ENCODE measurements at regions of chr17 and their contacts with region 1.

Region 1: DNA sequence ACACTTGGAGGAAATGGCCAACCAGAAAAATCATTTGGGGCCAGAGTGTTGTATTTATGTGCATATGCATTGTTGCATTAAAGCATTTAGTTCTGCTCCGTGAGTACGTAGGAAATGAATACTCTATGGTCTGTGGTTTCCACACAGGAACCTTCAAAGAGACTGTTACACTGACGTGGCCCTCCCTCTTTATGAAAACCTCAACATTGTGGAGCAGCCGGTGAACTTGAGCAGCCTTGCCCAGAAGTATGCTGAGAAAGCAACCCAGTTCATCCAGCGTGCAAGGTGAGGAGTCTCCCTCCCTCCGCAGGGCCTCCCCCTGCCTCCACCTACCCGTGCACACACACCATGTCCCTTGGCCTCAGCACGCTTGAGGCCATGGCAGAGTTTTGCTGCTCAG is 65.2 kb downstream of the ARSG start:
- DNase-seq: peak; percentile 46 to 84 (median 82)
- H3K4me3 ChIP-seq: peak overlapping the region; percentile 5
- H3K4me3 Mint-ChIP-seq: peak overlapping the region; percentile 23 to 82 (median 70)
- H3K27ac ChIP-seq: no peak overlapping the region
- H3K27ac Mint-ChIP-seq: peak overlapping the region; percentile 55 to 96 (median 92)
- H3K4me1 ChIP-seq: peaks cover 60% of the 10 kb centered on the region
- H3K4me1 Mint-ChIP-seq: peaks cover 53 to 68% (median 68%) of the 10 kb centered on the region in 3 donors
- H3K27me3 ChIP-seq: no peaks in the 10 kb centered on the region
- H3K27me3 Mint-ChIP-seq: no peaks in the 10 kb centered on the region

Region 2: DNA sequence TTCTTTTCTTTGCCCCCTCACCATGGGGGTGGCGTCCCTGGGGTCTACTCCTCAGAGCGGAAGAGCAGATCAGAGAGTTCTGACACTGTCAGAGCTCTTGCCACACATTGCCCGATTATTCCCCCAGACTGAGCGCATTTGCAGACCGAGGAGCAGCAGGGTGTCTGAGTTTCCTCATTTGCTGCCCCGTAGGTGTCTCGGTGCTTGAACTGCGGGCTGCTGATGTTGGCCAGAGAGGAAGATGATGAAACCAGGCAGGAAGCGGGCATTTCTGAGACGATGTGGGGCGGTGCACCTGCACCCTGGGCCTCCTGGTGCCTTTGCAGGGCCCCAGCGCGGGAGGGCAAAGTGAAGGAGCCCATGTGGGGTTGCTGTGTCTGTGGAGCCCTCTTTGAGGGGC is 10.1 kb before region 1 on chr17:
- CTCF ChIA-PET with region 1: interaction called, 10 read pairs
- POLR2A ChIA-PET with region 1: interaction called, 4 read pairs
- DNase-seq: peak; percentile 34 to 79 (median 62)
- H3K4me3 ChIP-seq: peak overlapping the region; percentile 28
- H3K4me3 Mint-ChIP-seq: peak overlapping the region; percentile 55 to 87 (median 82)
- H3K27ac ChIP-seq: peak overlapping the region; percentile 43
- H3K27ac Mint-ChIP-seq: peak overlapping the region; percentile 90 to 99 (median 94)
- H3K4me1 ChIP-seq: peaks cover 77% of the 10 kb centered on the region
- H3K4me1 Mint-ChIP-seq: peaks cover 74 to 84% (median 76%) of the 10 kb centered on the region in 3 donors
- H3K27me3 ChIP-seq: no peaks in the 10 kb centered on the region
- H3K27me3 Mint-ChIP-seq: peaks cover 0 to 1% of the 10 kb centered on the region in 2 donors

Region 3: GRCh38 chr17:68391561-68392268 is 35.2 kb after region 1 on chr17:
- CTCF ChIA-PET with region 1: no interaction called
- POLR2A ChIA-PET with region 1: no interaction called
- DNase-seq: no peak
- H3K4me3 ChIP-seq: no peak overlapping the region
- H3K4me3 Mint-ChIP-seq: no peak overlapping the region
- H3K27ac ChIP-seq: no peak overlapping the region
- H3K27ac Mint-ChIP-seq: peak overlapping the region in 1 of 8 donors; percentile 19
- H3K4me1 ChIP-seq: peaks cover under 1% of the 10 kb centered on the region
- H3K4me1 Mint-ChIP-seq: peaks cover 1 to 5% (median 2%) of the 10 kb centered on the region in 3 donors
- H3K27me3 ChIP-seq: no peaks in the 10 kb centered on the region
- H3K27me3 Mint-ChIP-seq: no peaks in the 10 kb centered on the region

Measured in CD8-positive, alpha-beta memory T cell (primary cell).